ENCODE measurements at regions of chr3 and their contacts with region 1.

Region 1: DNA sequence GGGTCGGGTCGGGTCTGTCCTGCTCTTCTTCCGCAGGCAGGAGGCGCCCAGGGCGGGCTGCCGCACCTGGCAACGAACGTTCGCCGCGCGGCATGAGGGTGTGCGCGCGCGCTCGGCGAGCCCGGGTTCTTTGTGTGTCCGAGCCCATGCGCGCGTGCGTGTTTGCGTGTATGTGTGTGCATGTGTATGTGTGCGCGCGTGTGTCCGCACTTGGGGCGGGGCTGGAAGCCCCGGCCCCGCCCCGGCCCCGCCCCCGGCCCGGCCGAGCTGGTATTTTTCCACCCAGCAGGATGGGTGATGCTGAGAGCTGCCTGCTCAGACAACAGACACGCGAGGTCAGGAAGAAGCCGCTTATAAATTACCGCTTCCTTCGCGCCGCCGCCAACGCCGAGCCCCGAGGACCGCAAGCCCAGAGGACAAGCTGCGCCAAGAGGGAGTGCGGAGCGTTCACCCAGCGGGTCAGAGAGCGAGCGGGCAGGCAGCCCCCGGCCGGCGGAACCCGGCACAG is at the start of gene SLC6A6:
- DNase-seq: peak; percentile 97
- H3K4me3 ChIP-seq: peak within 1 kb of the TSS; percentile 39 to 86 (median 58)
- H3K27ac ChIP-seq: peak within 1 kb of the TSS; percentile 72 to 94 (median 81)
- H3K4me1 ChIP-seq: peaks cover 0 to 48% (median 39%) of the 10 kb centered on the region in 4 donors
- H3K27me3 ChIP-seq: no peaks in the 10 kb centered on the region
- CTCF ChIP-seq: peak in 3 of 4 experiments; percentile 23 to 43 (median 38)
- EP300 ChIP-seq: peak in 1 of 4 donors; percentile 43
- POLR2A ChIP-seq: peak in 1 of 2 donors; percentile 18
- total RNA-seq, gene SLC6A6: 6.4 to 19.1 (median 9.1) TPM

Region 2: DNA sequence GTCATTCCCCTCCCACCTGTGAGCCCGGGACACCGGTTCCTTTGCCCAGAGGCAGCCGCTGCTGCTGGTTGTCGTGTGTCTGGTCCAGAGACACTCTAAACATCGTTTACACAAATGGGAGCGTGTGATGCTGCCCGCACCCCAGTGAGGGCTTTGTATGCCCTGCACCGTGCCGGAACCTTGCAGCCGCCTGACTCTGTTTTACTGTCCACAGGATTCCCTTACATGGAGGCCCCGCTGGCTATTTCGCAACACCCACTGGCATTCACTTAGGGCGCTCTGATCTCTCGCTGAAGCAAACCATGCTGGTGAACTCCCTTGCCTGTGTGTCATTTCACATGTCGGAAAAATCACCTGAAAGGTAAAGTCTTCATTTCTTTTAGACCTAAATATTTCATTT is 100.8 kb before region 1 on chr3:
- intact Hi-C with region 1: no loop called
- DNase-seq: peak; percentile 86
- H3K4me3 ChIP-seq: no peak overlapping the region
- H3K27ac ChIP-seq: peak overlapping the region in 3 of 4 donors; percentile 29 to 66 (median 43)
- H3K4me1 ChIP-seq: peaks cover 0 to 46% (median 23%) of the 10 kb centered on the region in 4 donors
- H3K27me3 ChIP-seq: no peaks in the 10 kb centered on the region
- CTCF ChIP-seq: no peak
- EP300 ChIP-seq: peak; percentile 7 to 79 (median 45)
- POLR2A ChIP-seq: no peak

Region 3: DNA sequence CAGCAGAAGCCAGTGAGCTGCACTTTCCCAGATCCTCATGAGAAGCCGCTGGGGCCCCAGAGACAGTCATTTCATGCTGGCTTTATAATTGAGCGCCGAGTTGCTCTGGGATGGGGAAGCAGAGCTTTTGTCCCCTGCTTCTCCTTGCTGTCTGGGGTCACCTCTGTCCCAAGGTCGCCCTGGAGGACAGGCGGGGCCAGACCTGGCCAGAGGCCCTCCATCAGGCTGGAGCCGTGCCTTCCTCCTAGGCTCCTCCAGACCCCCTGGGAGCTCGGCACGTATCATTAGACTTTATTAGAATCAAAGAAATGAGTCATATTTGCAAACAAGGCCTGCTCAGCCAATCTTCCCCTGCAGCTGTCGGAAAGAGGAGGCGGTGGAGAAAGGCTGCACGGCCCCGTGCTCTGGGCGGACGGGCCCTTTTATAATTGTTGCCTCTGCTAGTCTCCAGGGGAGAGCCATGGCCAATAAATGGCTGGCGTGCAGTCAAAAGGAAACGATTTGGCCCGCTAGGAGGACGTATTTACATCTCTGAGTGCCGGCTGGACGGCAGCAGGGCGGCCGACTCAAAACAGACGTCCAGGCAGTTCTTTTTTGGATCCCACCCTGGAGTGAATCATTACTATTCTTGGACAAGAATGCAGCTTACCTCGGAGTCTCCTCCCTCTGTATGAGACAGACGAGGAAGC is 50.5 kb after region 1 on chr3:
- intact Hi-C with region 1: loop called (anchors 2 kb)
- DNase-seq: peak; percentile 98
- H3K4me3 ChIP-seq: no peak overlapping the region
- H3K27ac ChIP-seq: peak overlapping the region; percentile 82 to 97 (median 86)
- H3K4me1 ChIP-seq: peaks cover 0 to 45% (median 37%) of the 10 kb centered on the region in 4 donors
- H3K27me3 ChIP-seq: no peaks in the 10 kb centered on the region
- CTCF ChIP-seq: peak in 1 of 4 experiments; percentile 30
- EP300 ChIP-seq: peak; percentile 1 to 84 (median 30)
- POLR2A ChIP-seq: no peak

Measured in sigmoid colon (tissue), 7 donors.